Dendritic cell treated with granulocyte-macrophage colony-stimulating factor and Interleukin-4, amounts not matched to agents 40 ng/mL and 50 ng/mL, for 4 days (primary cell): ENCODE measurements at regions of chr9 and their contacts with region 1.

Region 1: DNA sequence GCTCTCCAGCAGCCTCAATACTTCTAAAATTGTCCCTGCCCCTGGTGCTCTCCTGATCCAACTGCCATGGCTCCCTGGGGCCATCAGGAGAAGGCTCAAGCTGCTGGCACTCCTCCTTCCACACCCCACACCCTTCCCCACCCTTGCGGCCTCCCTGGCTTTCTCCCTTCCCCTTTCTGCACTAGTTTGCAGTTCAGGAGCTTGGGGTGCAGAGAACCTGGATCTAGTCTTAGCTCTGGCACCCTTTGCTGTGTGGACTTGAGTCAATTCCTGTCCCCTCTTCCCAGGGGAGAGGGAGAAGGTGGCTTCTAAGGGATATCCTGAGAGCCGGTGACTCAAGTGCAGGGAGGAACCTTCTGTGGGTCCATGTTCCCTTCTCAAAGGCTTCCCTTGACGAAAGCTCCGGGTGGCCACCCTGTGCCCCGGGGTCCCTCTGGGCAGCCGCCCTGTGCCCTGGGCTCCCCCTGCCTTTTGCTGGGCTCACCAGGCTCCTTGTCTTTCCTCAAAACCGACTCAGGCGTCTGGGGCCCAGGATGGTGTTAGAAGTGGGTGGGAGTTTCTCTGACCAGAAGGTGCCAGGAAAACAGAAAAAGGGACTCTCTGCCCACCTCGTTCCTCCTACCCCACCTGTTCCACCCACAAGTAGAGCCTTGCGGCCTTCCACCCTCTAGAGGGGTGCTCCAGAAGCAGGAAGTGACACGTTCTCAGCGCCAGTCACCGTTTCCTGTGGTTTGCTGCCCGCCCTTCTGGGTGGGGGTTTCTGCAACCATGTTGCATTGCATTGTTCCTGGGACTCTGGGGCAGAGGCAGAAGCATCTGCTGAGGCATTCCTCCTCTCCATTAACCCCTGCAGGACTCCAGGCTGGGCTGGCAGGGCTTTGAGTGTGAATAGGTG is 15.0 kb downstream of the GLIPR2 start:
- H3K4me3 Mint-ChIP-seq: peak overlapping the region; percentile 65
- H3K27ac Mint-ChIP-seq: peak overlapping the region; percentile 91
- H3K4me1 Mint-ChIP-seq: peaks cover 71% of the 10 kb centered on the region
- H3K27me3 Mint-ChIP-seq: no peaks in the 10 kb centered on the region

Region 2: GRCh38 chr9:36074870-36075532 is 76.6 kb before region 1 on chr9:
- intact Hi-C with region 1: no loop called
- H3K4me3 Mint-ChIP-seq: no peak overlapping the region
- H3K27ac Mint-ChIP-seq: no peak overlapping the region
- H3K4me1 Mint-ChIP-seq: peaks cover 11% of the 10 kb centered on the region
- H3K27me3 Mint-ChIP-seq: no peaks in the 10 kb centered on the region

Region 3: GRCh38 chr9:36136272-36136893 is 15.2 kb before region 1 on chr9 and contains the start of gene GLIPR2:
- intact Hi-C with region 1: loop called (anchors 2 kb)
- H3K4me3 Mint-ChIP-seq: peak within 1 kb of the TSS; percentile 98
- H3K27ac Mint-ChIP-seq: peak within 1 kb of the TSS; percentile 93
- H3K4me1 Mint-ChIP-seq: peaks cover 60% of the 10 kb centered on the region
- H3K27me3 Mint-ChIP-seq: peaks cover 3% of the 10 kb centered on the region

Region 4: GRCh38 chr9:36190388-36191287 is 39.1 kb after region 1 on chr9 and contains the start of gene CLTA:
- intact Hi-C with region 1: loop called (anchors 2 kb)
- H3K4me3 Mint-ChIP-seq: peak within 1 kb of the TSS; percentile 84
- H3K27ac Mint-ChIP-seq: peak within 1 kb of the TSS; percentile 93
- H3K4me1 Mint-ChIP-seq: peaks cover 57% of the 10 kb centered on the region
- H3K27me3 Mint-ChIP-seq: peaks cover 6% of the 10 kb centered on the region